MCF 10A (cell line): ENCODE measurements at regions of chr6 and their contacts with region 1.

Region 1: GRCh38 chr6:2738373-2738979 is 12.2 kb downstream of the MYLK4 start:
- DNase-seq: peak; percentile 52
- H3K4me3 Mint-ChIP-seq: no peak overlapping the region
- H3K27ac Mint-ChIP-seq: no peak overlapping the region
- H3K4me1 Mint-ChIP-seq: no peaks in the 10 kb centered on the region
- H3K27me3 Mint-ChIP-seq: no peaks in the 10 kb centered on the region
- CTCF ChIP-seq: peak; percentile 59

Region 2: GRCh38 chr6:2166717-2167116 is 571.8 kb before region 1 on chr6:
- CTCF ChIA-PET with region 1: no interaction called
- POLR2A ChIA-PET with region 1: no interaction called
- intact Hi-C with region 1: no loop called
- DNase-seq: peak; percentile 66
- H3K4me3 Mint-ChIP-seq: no peak overlapping the region
- H3K27ac Mint-ChIP-seq: no peak overlapping the region
- H3K4me1 Mint-ChIP-seq: peaks cover 18% of the 10 kb centered on the region
- H3K27me3 Mint-ChIP-seq: no peaks in the 10 kb centered on the region
- CTCF ChIP-seq: no peak

Region 3: DNA sequence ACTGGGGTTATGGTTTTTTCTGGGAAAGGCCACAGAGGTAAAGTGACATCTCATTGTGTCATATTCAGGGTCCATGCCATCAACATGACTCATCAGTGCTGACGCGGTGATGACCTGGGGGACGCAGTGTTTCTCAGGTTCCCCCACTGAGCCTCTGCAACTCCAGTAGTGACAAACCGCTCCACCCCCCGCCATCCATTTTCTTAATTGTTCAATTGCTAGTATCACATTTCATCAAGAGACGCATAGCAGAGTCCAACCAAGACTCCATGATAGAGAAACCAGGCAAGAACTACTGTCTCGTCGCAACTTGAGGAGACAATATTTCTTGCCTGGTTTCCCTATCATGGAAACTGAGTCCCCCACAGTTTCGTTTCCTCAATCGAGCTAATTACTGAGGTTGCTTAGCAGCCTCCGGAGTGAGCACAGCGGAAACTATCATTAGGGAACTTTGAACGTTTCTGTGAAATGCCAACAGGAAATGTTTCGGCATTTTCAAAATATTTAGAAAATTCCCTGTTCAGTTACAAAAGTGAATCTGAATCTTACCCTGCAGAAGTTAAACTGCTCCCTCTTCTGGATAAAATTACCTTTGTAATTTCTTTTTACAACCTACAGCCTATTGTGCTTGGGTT is 115.4 kb after region 1 on chr6:
- CTCF ChIA-PET with region 1: no interaction called
- POLR2A ChIA-PET with region 1: no interaction called
- intact Hi-C with region 1: loop called (anchors 1 kb)
- DNase-seq: peak; percentile 69
- H3K4me3 Mint-ChIP-seq: peak overlapping the region; percentile 50
- H3K27ac Mint-ChIP-seq: no peak overlapping the region
- H3K4me1 Mint-ChIP-seq: peaks cover 1% of the 10 kb centered on the region
- H3K27me3 Mint-ChIP-seq: no peaks in the 10 kb centered on the region
- CTCF ChIP-seq: peak; percentile 42

Region 4: GRCh38 chr6:3518356-3519225 is 780.1 kb after region 1 on chr6:
- CTCF ChIA-PET with region 1: no interaction called
- POLR2A ChIA-PET with region 1: no interaction called
- intact Hi-C with region 1: no loop called
- DNase-seq: peak; percentile 99
- H3K4me3 Mint-ChIP-seq: peak overlapping the region; percentile 6
- H3K27ac Mint-ChIP-seq: peak overlapping the region; percentile 44
- H3K4me1 Mint-ChIP-seq: peaks cover 44% of the 10 kb centered on the region
- H3K27me3 Mint-ChIP-seq: no peaks in the 10 kb centered on the region
- CTCF ChIP-seq: no peak